ENCODE measurements at regions of chr3 and their contacts with region 1.

Region 1: GRCh38 chr3:168095611-168096209 is at the start of gene GOLIM4:
- DNase-seq: peak; percentile 95 to 98
- H3K4me3 ChIP-seq: peak within 1 kb of the TSS; percentile 70 to 81
- H3K27ac ChIP-seq: peak within 1 kb of the TSS; percentile 88 to 94
- H3K4me1 ChIP-seq: peaks cover 0 to 39% (median 24%) of the 10 kb centered on the region in 4 donors
- H3K27me3 ChIP-seq: no peaks in the 10 kb centered on the region
- CTCF ChIP-seq: no peak

Region 2: DNA sequence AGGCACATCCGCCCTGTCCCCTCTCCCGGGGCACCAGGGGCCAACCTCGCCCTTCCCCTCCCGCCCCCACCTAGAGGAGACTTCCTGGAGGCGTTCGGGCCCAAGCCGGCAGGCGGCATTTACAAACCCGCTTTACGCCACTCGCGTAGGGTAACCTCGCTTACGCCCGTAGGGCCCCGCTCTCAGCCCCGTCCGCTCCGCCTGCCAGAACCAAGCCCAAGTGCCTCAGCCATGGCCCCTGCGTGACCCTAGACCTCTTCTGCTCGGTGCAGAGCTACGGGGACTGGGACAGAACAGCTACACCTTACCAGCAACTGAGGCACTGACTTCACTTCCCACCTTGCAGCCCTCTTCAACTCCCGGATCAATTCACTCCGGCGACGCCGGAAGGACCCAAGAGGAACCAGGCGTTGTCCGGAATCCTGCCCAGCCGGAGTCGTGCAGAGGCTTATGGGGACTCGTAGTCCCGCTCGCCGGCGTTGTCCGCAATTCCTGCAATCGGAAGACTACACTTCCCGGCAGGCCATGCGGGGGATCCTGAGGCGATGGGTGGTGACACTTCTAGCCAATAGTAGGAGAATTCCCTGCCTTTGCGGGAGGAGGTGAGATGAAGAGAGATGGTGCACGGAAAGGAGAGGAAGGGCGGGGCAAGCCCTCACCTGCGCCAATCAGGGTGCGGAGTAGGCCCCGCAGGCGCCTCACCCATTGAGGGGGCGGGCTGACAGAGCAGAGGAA is 361.0 kb before region 1 on chr3 and contains the start of gene PDCD10:
- intact Hi-C with region 1: loop called (anchors 10 kb)
- DNase-seq: peak; percentile 99
- H3K4me3 ChIP-seq: peak within 1 kb of the TSS; percentile 70 to 78
- H3K27ac ChIP-seq: peak within 1 kb of the TSS; percentile 90 to 95
- H3K4me1 ChIP-seq: peaks cover 0 to 40% (median 10%) of the 10 kb centered on the region in 4 donors
- H3K27me3 ChIP-seq: no peaks in the 10 kb centered on the region
- CTCF ChIP-seq: no peak

Region 3: GRCh38 chr3:168047190-168047795 is 48.4 kb before region 1 on chr3:
- intact Hi-C with region 1: loop called (anchors 2 kb)
- DNase-seq: no peak
- H3K4me3 ChIP-seq: no peak overlapping the region
- H3K27ac ChIP-seq: no peak overlapping the region
- H3K4me1 ChIP-seq: peaks cover 0 to 32% (median 19%) of the 10 kb centered on the region in 4 donors
- H3K27me3 ChIP-seq: no peaks in the 10 kb centered on the region
- CTCF ChIP-seq: peak; percentile 78 to 92

Region 4: DNA sequence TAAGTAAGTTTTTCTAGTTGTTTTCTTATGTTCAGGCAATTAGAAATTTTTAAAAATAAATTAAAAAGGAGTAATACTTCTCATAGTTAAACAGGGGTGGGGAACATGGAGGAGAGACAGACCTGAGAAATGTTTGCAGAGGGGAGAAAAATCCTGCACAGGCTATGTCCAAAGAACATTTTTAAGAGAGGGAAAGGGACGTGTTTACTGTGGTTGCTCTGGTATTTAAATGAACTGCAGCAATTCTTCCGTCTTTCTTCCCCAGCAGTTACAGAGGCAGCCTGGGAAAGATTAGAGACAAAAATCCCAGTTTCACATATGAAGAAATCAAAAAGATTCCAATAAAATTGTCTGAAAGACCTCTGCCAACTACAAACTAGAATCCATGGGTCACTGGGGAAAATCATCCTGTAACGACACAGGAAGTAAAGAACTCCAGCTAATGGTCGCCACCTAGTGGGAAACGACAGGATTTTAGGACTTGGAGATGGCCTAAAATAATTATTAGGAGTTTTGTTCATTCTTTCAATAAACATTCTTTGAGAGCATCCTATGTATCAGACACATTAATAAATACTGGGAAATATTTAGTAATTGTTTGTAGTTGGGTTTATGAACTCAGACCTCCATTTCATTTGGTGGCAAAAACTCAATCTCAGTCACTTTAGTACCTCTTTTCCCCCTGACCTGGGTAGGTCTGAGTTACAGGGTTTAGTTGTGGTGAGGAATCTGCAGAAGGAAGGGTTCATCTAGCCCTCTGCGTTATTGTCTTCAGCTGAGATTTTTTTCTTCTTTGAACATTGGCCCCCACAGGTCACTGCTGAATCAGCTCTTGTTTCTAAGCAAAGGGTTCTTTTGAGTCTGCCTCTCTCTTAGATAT is 69.9 kb after region 1 on chr3:
- intact Hi-C with region 1: loop called (anchors 5 kb)
- DNase-seq: peak in 1 of 2 donors; percentile 60
- H3K4me3 ChIP-seq: no peak overlapping the region
- H3K27ac ChIP-seq: no peak overlapping the region
- H3K4me1 ChIP-seq: no peaks in the 10 kb centered on the region
- H3K27me3 ChIP-seq: no peaks in the 10 kb centered on the region
- CTCF ChIP-seq: peak; percentile 78 to 81